ENCODE measurements at regions of chr2 and their contacts with region 1.

Region 1: GRCh38 chr2:54704688-54705605 is 18.5 kb upstream of the EML6 start:
- DNase-seq: peak; percentile 81
- H3K4me3 ChIP-seq: no peak overlapping the region
- H3K27ac ChIP-seq: no peak overlapping the region
- H3K4me1 ChIP-seq: peaks cover 18% of the 10 kb centered on the region
- CTCF ChIP-seq: peak; percentile 97

Region 2: DNA sequence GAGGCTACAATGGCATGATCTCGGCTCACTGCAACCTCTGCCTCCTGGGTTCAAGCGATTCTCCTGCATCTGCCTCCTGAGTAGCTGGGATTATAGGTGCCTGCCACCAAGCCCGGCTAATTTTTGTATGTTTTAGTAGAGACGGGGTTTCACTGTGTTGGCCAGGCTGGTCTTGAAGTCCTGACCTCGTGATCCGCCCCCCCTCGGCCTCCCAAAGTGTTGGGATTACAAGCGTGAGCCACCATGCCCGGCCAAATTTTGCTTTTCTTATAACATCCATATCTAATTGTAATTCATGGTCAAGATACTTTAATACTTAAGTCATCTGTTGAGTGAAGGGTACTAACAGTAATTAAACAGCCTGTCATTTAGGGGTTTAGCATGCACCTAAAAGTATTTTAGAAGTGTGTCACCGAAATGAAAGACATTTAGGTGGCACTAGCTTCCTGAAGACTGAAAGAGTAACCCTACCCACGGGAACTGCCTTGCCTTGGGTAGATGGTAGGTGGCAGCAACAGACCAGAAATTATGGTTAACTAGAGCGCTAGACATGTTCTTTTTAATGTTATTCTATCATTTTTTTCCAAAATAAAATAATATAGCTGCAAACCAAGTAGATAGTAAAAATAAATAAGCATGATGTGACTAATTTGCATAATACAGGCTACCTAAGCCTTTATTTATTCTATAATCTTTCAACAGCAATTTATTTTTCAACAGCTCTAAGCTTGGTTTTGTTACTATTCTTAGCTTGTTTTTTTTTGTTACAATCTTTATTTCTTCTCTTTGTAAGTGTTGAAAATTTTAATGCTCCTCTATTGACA is 598.1 kb before region 1 on chr2:
- CTCF ChIA-PET with region 1: interaction called, 18 read pairs
- POLR2A ChIA-PET with region 1: interaction called, 12 read pairs
- intact Hi-C with region 1: loop called (anchors 1 kb)
- DNase-seq: peak; percentile 84
- H3K4me3 ChIP-seq: no peak overlapping the region
- H3K27ac ChIP-seq: peak overlapping the region; percentile 50
- H3K4me1 ChIP-seq: peaks cover 72% of the 10 kb centered on the region
- CTCF ChIP-seq: peak; percentile 98

Region 3: DNA sequence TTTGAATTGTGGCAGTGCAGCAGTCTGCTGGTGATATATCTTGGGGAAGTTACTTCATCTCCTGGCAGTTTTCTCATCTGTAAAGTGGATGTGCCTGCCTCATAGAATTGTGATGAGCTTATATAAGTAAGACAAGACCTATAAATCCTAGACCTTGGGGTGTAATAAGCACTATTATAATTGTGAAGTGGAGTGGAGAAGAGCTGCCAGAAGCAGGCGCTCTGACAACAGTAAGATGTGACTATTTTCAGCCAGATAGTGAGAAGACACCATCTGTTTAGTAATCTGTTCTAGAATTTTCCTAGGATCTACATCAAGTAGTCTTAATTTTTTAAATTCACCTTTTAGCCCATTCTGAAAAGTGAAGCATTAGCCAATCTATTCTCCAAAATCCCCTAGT is 363.3 kb before region 1 on chr2:
- CTCF ChIA-PET with region 1: no interaction called
- POLR2A ChIA-PET with region 1: no interaction called
- intact Hi-C with region 1: loop called (anchors 10 kb)
- DNase-seq: peak; percentile 26
- H3K4me3 ChIP-seq: no peak overlapping the region
- H3K27ac ChIP-seq: no peak overlapping the region
- H3K4me1 ChIP-seq: no peaks in the 10 kb centered on the region
- CTCF ChIP-seq: peak; percentile 68

Region 4: GRCh38 chr2:54657664-54658083 is 47.3 kb before region 1 on chr2:
- CTCF ChIA-PET with region 1: no interaction called
- POLR2A ChIA-PET with region 1: interaction called, 3 read pairs
- intact Hi-C with region 1: loop called (anchors 2 kb)
- DNase-seq: peak; percentile 65
- H3K4me3 ChIP-seq: no peak overlapping the region
- H3K27ac ChIP-seq: no peak overlapping the region
- H3K4me1 ChIP-seq: no peaks in the 10 kb centered on the region
- CTCF ChIP-seq: peak; percentile 83